Pancreas (tissue), 10 donors: ENCODE measurements at regions of chr5 and their contacts with region 1.

Region 1: DNA sequence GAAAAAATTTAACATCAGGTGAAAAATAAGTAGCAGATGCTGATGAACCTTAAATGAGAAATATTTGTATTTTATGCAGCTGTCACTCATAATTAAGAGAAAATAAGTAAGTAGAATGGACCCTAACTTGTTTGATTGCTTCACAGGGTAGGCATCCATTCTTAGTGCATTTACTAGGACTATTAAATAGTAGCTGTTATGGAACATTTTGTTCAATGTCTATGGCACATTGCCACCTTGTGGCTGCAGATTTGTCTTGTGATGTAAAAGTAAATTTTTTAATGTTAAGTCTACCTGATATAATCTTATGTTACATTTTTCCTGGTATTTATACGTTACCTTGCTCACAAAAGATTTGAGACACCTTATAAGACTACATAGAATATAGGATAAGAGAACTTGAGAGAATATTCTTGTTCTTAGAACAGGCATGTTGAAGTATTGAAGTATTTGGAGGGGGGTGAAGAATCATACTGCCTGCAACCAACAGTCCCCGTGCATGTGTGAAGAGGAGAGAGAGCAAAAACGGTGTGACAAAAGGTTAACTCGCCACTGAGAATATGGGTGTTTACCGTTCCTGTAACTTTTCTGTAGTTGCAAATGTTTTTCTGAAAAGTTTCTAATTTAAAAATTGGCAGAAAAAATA is 161.1 kb downstream of the MAST4 start:
- DNase-seq: peak in 3 of 6 donors; percentile 20 to 54 (median 25)
- ATAC-seq: peak; percentile 43 to 83 (median 80)
- H3K4me3 ChIP-seq: no peak overlapping the region
- H3K27ac ChIP-seq: no peak overlapping the region
- H3K4me1 ChIP-seq: no peaks in the 10 kb centered on the region
- H3K27me3 ChIP-seq: no peaks in the 10 kb centered on the region
- CTCF ChIP-seq: peak in 3 of 4 donors; percentile 26 to 45 (median 39)

Region 2: DNA sequence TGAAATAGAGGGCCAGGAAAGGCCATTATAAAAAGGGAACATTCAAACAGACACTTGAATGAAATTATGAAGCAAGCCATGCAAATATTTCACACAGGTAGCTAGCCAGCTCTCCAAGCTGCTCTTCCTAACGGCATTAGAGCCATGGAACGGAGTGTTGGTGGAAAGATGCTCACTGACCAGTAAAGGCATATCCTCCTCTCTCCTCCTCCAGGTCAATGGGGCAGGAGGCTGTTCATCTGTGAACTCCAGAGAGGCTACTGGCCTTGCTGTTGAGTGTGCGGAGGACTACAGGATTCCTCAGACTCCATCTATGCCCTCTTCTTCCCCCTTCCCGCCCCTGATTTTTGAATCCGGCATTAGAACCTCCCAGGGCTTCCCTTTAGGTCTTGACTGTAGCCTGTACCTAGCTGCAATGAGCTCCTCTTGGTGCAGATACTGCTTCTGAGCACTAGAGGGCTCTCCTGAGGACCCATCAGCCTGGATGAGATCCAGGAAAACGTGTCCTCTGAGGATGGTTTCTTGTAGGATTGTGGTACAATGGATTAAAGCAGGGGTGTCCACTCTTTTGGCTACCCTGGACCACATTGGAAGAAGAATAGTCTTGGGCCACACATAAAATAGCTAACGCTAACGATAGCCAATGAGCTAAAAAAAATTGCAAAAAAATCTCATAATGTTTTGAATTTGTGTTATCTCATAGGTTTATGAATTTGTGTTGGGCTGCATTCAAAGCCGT is 451.0 kb before region 1 on chr5:
- intact Hi-C with region 1: loop called in 2 of 3 experiments (anchors 5 to 10 kb)
- DNase-seq: peak in 4 of 6 donors; percentile 33 to 73 (median 42)
- ATAC-seq: peak; percentile 90 to 98 (median 96)
- H3K4me3 ChIP-seq: no peak overlapping the region
- H3K27ac ChIP-seq: no peak overlapping the region
- H3K4me1 ChIP-seq: no peaks in the 10 kb centered on the region
- H3K27me3 ChIP-seq: no peaks in the 10 kb centered on the region
- CTCF ChIP-seq: peak; percentile 58 to 80 (median 74)

Region 3: DNA sequence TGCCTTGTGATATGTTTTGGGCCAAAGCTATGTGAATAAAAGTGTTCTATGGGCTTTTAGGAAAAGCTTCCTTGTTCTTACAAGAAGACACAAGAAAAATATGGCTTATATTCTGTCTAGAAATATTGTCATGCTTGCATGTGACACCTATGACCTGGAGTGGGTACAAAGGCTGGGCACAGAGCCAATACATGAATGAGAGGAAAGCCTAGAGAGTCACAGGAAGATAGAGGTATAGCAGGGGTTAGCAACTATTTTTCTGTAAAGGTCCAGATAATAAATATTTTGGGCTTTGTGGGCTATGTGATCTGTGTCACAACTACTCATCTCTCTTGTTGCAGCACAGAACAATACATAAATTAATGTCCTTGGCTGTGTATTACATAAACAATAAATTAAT is 635.9 kb after region 1 on chr5:
- intact Hi-C with region 1: no loop called
- DNase-seq: no peak
- ATAC-seq: no peak
- H3K4me3 ChIP-seq: no peak overlapping the region
- H3K27ac ChIP-seq: no peak overlapping the region
- H3K4me1 ChIP-seq: no peaks in the 10 kb centered on the region
- H3K27me3 ChIP-seq: peaks cover 0 to 6% (median 0%) of the 10 kb centered on the region in 4 donors
- CTCF ChIP-seq: no peak